IMR-90 (cell line): ENCODE measurements at regions of chr6 and their contacts with region 1.

Region 1: DNA sequence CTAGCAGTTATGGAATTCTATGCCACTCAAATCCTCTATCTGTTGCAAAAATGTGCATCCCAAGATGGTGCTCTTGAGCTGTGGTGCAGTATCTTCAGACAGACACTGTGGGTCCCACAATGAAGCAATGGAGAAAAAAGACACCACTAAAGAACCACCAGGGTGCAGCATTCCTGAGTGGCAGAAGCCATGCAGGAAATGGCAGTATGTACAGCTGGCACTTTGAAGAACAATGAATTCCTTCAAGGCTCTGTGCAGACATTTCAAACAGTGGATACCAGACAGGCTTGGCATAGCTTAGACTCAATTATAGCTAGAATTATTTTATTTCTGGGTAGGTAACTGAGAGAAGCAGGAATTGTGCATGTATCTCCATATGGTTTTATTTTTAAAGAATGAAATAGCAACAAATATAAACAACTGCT is 24.0 kb upstream of the HDAC2 start:
- DNase-seq: peak; percentile 93
- ATAC-seq: peak; percentile 82
- H3K4me3 ChIP-seq: no peak overlapping the region
- H3K27ac ChIP-seq: peak overlapping the region; percentile 1; the same call in 1 of the 2 replicates
- H3K4me1 ChIP-seq: peaks cover 6% of the 10 kb centered on the region
- H3K27me3 ChIP-seq: no peaks in the 10 kb centered on the region
- CTCF ChIP-seq: peak; percentile 99; the same call in 1 of the 2 replicates
- POLR2A ChIP-seq: no peak
- RAD21 ChIP-seq: peak; percentile 91

Region 2: GRCh38 chr6:114024746-114025145 is 29.8 kb after region 1 on chr6:
- CTCF ChIA-PET with region 1: interaction called, 11 read pairs
- POLR2A ChIA-PET with region 1: no interaction called
- dilution Hi-C with region 1: no loop called
- in situ Hi-C with region 1: no loop called
- intact Hi-C with region 1: no loop called
- DNase-seq: peak; percentile 41
- ATAC-seq: no peak
- H3K4me3 ChIP-seq: no peak overlapping the region
- H3K27ac ChIP-seq: no peak overlapping the region
- H3K4me1 ChIP-seq: peaks cover 3% of the 10 kb centered on the region; the same call in 1 of the 2 replicates
- H3K27me3 ChIP-seq: no peaks in the 10 kb centered on the region
- CTCF ChIP-seq: no peak
- POLR2A ChIP-seq: no peak
- RAD21 ChIP-seq: no peak

Region 3: DNA sequence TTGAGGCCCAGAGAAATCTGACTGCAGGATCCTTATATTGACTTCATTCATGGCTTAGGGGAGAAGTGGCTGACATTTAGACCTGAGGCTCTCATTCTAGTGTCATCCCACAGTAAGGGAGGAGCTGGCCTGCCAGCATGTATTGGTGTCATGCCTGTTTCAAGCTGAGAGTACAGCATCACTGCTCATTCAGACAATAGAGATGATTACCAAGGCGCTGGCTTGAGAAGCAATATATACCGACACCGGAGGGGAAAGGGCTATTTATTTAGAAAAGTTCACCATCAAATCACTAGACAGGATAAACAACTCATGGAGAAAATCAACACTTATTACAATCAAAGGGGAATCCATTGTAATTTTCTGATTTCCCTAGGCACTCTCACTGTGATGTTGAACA is 60.4 kb after region 1 on chr6:
- CTCF ChIA-PET with region 1: no interaction called
- POLR2A ChIA-PET with region 1: no interaction called
- dilution Hi-C with region 1: no loop called
- in situ Hi-C with region 1: no loop called
- intact Hi-C with region 1: no loop called
- DNase-seq: no peak
- ATAC-seq: no peak; the same call in 1 of the 2 replicates
- H3K4me3 ChIP-seq: no peak overlapping the region
- H3K27ac ChIP-seq: no peak overlapping the region
- H3K4me1 ChIP-seq: peaks cover 5% of the 10 kb centered on the region
- H3K27me3 ChIP-seq: no peaks in the 10 kb centered on the region
- CTCF ChIP-seq: no peak
- POLR2A ChIP-seq: no peak
- RAD21 ChIP-seq: no peak

Region 4: DNA sequence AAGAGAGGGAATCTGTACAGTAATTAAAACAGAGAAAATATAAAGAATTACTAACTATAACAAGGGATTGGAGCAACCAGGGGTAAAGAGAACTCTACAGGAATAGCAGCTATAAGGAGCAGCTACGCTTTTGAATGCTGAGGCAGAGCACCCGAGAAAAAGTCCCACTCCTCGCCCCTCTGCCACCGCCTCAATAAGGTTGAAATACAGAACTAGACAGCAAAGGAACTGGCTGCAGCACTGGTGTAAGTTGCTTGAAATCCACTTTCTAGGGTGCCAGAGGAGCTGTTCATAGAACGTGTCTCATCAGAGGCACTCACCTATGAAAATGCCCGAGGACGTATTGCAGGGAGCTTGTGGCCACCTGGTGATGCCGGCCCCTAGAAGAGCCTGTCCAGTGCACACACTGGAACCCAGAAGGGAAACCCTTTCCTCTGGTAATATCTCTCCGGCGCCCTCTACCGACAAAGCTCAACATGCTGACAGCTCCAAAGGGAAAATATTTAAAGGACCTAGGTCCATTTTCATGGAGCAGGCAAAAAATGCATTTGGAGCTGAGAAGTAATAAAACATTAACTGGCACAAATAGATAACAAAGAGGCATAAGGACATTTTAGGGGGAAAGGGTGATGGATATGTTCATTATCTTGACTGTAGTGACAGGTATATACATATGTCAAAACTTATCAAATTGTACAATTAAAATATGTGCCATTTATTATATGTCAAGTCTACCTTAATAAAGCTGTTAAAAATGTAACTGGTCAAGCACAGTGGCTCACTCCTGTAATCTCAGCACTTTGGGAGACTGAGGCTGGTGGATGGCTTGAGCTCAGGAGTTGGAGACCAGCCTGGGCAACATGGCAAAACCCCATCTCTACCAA is 113.4 kb after region 1 on chr6:
- CTCF ChIA-PET with region 1: interaction called, 78 read pairs
- POLR2A ChIA-PET with region 1: no interaction called
- dilution Hi-C with region 1: no loop called
- in situ Hi-C with region 1: loop called (anchors 5 kb)
- intact Hi-C with region 1: loop called (anchors 1 kb)
- DNase-seq: peak; percentile 68
- ATAC-seq: peak; percentile 99
- H3K4me3 ChIP-seq: no peak overlapping the region
- H3K27ac ChIP-seq: no peak overlapping the region
- H3K4me1 ChIP-seq: no peaks in the 10 kb centered on the region
- H3K27me3 ChIP-seq: peaks cover 6% of the 10 kb centered on the region
- CTCF ChIP-seq: peak; percentile 86
- POLR2A ChIP-seq: no peak
- RAD21 ChIP-seq: peak; percentile 72

Region 5: GRCh38 chr6:114304304-114304887 is 309.5 kb after region 1 on chr6:
- CTCF ChIA-PET with region 1: interaction called, 12 read pairs
- POLR2A ChIA-PET with region 1: no interaction called
- dilution Hi-C with region 1: no loop called
- in situ Hi-C with region 1: loop called (anchors 25 kb)
- intact Hi-C with region 1: loop called (anchors 1 kb)
- DNase-seq: peak; percentile 24
- ATAC-seq: peak; percentile 66
- H3K4me3 ChIP-seq: no peak overlapping the region
- H3K27ac ChIP-seq: no peak overlapping the region
- H3K4me1 ChIP-seq: no peaks in the 10 kb centered on the region
- H3K27me3 ChIP-seq: no peaks in the 10 kb centered on the region
- CTCF ChIP-seq: peak; percentile 55
- POLR2A ChIP-seq: no peak
- RAD21 ChIP-seq: peak; percentile 22; the same call in 1 of the 2 replicates

Region 6: GRCh38 chr6:114906096-114906495 is 911.2 kb after region 1 on chr6:
- CTCF ChIA-PET with region 1: no interaction called
- POLR2A ChIA-PET with region 1: interaction called, 16 read pairs
- dilution Hi-C with region 1: no loop called
- in situ Hi-C with region 1: no loop called
- intact Hi-C with region 1: no loop called
- DNase-seq: no peak
- ATAC-seq: no peak
- H3K4me3 ChIP-seq: no peak overlapping the region
- H3K27ac ChIP-seq: no peak overlapping the region
- H3K4me1 ChIP-seq: no peaks in the 10 kb centered on the region
- H3K27me3 ChIP-seq: no peaks in the 10 kb centered on the region
- CTCF ChIP-seq: no peak
- POLR2A ChIP-seq: no peak
- RAD21 ChIP-seq: no peak